ENCODE measurements at regions of chr17 and their contacts with region 1.

Region 1: DNA sequence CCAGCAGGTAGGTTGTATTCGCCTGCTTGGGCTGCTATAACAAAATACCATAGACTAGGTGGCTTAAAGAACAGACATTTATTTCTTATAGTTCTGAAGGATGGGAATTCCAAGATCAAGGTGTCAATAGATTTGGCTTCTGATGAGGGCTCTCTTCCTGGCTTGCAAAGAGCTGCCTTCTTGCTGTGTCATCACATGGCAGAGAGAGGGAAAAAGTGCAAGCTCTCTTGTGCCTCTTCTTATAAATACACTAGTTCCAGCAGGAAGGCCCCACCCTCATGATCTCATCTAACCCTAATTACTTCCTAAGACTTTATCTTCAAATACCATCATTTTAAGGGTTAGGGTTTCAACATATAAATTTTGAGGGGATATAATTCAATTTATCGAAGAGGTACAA is 30.6 kb downstream of the ABCA9 start:
- DNase-seq: no peak
- ATAC-seq: no peak
- H3K4me3 ChIP-seq: no peak overlapping the region
- H3K4me3 Mint-ChIP-seq: no peak overlapping the region
- H3K27ac ChIP-seq: no peak overlapping the region
- H3K27ac Mint-ChIP-seq: no peak overlapping the region
- H3K4me1 ChIP-seq: no peaks in the 10 kb centered on the region
- H3K4me1 Mint-ChIP-seq: no peaks in the 10 kb centered on the region
- H3K27me3 ChIP-seq: no peaks in the 10 kb centered on the region
- H3K27me3 Mint-ChIP-seq: peaks cover 14% of the 10 kb centered on the region
- CTCF ChIP-seq: no peak

Region 2: DNA sequence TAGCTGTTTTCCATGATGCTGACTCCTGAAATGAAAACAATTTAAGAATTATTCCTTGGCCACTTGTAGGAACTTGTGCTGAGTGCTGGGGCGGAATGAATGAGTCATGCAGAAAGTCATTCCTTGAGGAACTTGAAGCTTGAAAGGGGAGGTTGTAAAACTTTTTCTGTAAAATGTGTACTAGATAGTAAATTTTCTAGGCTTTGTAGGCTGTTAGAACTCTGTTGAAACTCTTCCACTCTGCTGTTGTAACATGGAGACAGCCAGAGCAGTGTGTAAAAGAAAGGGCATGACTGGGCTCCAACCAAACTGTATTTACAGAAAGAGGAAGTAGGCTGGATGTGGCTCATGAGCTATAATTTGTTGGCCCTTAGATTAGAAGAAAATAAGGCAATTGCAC is 121.1 kb before region 1 on chr17:
- CTCF ChIA-PET with region 1: no interaction called
- POLR2A ChIA-PET with region 1: no interaction called
- intact Hi-C with region 1: loop called in 1 of 2 experiments (anchors 10 kb)
- DNase-seq: peak in 2 of 14 experiments; percentile 19 to 22
- ATAC-seq: no peak
- H3K4me3 ChIP-seq: no peak overlapping the region
- H3K4me3 Mint-ChIP-seq: no peak overlapping the region
- H3K27ac ChIP-seq: no peak overlapping the region
- H3K27ac Mint-ChIP-seq: no peak overlapping the region
- H3K4me1 ChIP-seq: no peaks in the 10 kb centered on the region
- H3K4me1 Mint-ChIP-seq: no peaks in the 10 kb centered on the region
- H3K27me3 ChIP-seq: no peaks in the 10 kb centered on the region
- H3K27me3 Mint-ChIP-seq: no peaks in the 10 kb centered on the region
- CTCF ChIP-seq: no peak

Region 3: DNA sequence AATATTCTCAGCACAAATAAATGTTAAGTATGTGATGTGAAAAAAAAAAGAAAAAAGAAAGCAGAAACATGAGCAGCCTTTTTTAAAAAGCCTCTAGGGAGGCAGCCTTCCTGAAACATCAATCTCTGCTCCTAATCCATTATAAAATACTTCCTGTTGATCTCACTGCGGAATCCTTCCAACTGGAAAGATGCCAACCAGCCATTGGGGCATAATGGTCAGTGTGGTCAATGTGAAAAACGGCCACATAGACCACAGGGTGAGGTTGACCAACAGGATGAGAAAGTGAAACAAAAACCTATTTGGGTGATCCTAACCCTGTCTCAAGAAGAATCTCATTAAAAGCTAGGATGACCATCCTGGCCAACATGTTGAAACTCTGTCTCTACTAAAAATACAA is 48.9 kb before region 1 on chr17:
- CTCF ChIA-PET with region 1: no interaction called
- POLR2A ChIA-PET with region 1: no interaction called
- intact Hi-C with region 1: loop called in 1 of 2 experiments (anchors 10 kb)
- DNase-seq: no peak
- ATAC-seq: no peak
- H3K4me3 ChIP-seq: no peak overlapping the region
- H3K4me3 Mint-ChIP-seq: no peak overlapping the region
- H3K27ac ChIP-seq: no peak overlapping the region
- H3K27ac Mint-ChIP-seq: no peak overlapping the region
- H3K4me1 ChIP-seq: no peaks in the 10 kb centered on the region
- H3K4me1 Mint-ChIP-seq: no peaks in the 10 kb centered on the region
- H3K27me3 ChIP-seq: no peaks in the 10 kb centered on the region
- H3K27me3 Mint-ChIP-seq: peaks cover 9% of the 10 kb centered on the region
- CTCF ChIP-seq: no peak

Region 4: DNA sequence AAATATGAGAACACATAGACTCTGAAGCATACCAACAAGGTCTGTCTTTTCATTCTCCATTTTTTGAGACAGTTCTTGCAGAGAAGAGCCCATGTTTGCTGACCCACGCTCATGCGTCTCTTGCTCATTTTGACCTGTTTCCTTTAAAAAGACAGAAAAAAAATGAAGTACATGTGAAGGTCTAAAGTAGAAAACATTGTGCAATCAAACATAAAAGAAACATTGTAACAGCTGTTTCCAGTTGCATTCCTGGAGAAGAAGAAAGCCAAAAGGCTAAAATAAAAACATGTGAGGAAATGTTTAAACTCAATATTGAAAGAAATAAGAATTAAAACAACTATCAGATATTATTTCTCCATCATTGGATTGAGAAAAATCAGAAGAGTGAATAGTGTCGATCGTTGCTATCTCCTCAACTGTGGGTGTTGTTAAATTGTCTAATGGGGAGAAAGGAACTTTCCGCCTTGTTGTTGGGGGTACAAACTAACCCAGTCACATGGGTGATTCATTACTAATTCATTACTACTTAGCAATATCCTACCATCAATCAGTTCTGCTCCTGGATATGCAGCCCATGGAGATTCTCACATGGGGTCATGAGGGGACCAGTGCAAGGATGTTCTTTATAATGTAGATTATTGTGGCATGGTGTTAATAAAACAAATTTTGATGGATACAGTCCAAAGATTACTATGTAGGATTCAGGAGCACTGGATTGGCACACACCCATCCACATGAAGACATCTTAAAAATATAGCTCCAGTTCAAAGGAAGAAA is 21.0 kb after region 1 on chr17:
- CTCF ChIA-PET with region 1: no interaction called
- POLR2A ChIA-PET with region 1: no interaction called
- intact Hi-C with region 1: no loop called
- DNase-seq: no peak
- ATAC-seq: no peak
- H3K4me3 ChIP-seq: no peak overlapping the region
- H3K4me3 Mint-ChIP-seq: no peak overlapping the region
- H3K27ac ChIP-seq: no peak overlapping the region
- H3K27ac Mint-ChIP-seq: no peak overlapping the region
- H3K4me1 ChIP-seq: no peaks in the 10 kb centered on the region
- H3K4me1 Mint-ChIP-seq: peaks cover 4% of the 10 kb centered on the region
- H3K27me3 ChIP-seq: no peaks in the 10 kb centered on the region
- H3K27me3 Mint-ChIP-seq: peaks cover 11% of the 10 kb centered on the region
- CTCF ChIP-seq: no peak

Region 5: GRCh38 chr17:69093279-69093789 is 63.2 kb after region 1 on chr17:
- CTCF ChIA-PET with region 1: no interaction called
- POLR2A ChIA-PET with region 1: no interaction called
- intact Hi-C with region 1: no loop called
- DNase-seq: peak in 1 of 14 experiments; percentile 8
- ATAC-seq: no peak
- H3K4me3 ChIP-seq: no peak overlapping the region
- H3K4me3 Mint-ChIP-seq: no peak overlapping the region
- H3K27ac ChIP-seq: no peak overlapping the region
- H3K27ac Mint-ChIP-seq: no peak overlapping the region
- H3K4me1 ChIP-seq: no peaks in the 10 kb centered on the region
- H3K4me1 Mint-ChIP-seq: peaks cover 6% of the 10 kb centered on the region
- H3K27me3 ChIP-seq: no peaks in the 10 kb centered on the region
- H3K27me3 Mint-ChIP-seq: peaks cover 10% of the 10 kb centered on the region
- CTCF ChIP-seq: no peak

Measured in CD4-positive, alpha-beta T cell (primary cell).